Posterior cingulate gyrus (tissue), 11 donors: ENCODE measurements at regions of chr6 and their contacts with region 1.

Region 1: DNA sequence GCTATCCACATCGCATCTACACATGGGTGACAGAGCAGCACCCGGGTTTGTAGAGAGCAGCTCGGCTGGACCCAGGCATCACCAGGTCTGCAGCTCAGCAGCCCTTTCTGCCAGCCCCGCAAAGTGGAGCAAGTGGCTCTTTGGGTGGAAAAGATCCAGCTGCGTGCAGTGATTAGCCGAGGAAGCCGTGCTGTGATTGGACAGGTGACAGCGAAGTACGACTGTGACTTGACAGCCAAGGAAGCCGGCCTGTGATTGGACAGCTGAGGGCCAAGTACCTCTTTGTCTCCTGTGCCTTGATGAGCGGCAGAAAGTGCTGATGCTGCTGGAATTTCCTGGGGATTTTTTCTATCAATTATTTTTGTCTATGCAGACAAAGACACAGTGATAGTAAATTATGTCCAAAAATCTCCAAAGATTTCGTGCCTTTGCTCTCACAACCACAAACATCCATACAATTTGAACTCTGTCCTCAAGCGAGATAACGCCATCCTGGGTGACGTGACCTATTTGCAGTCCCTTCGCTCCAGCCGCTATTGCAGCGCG is 62.3 kb upstream of the GPR31 start:
- DNase-seq: peak in 6 of 10 donors; percentile 32 to 94 (median 56)

Region 2: GRCh38 chr6:167279766-167280446 is 59.9 kb after region 1 on chr6:
- intact Hi-C with region 1: loop called (anchors 5 kb)
- DNase-seq: no peak

Region 3: GRCh38 chr6:167298153-167298552 is 78.1 kb after region 1 on chr6:
- intact Hi-C with region 1: no loop called
- DNase-seq: peak in 1 of 10 donors; percentile 18